ENCODE measurements at regions of chr1 and their contacts with region 1.

Region 1: DNA sequence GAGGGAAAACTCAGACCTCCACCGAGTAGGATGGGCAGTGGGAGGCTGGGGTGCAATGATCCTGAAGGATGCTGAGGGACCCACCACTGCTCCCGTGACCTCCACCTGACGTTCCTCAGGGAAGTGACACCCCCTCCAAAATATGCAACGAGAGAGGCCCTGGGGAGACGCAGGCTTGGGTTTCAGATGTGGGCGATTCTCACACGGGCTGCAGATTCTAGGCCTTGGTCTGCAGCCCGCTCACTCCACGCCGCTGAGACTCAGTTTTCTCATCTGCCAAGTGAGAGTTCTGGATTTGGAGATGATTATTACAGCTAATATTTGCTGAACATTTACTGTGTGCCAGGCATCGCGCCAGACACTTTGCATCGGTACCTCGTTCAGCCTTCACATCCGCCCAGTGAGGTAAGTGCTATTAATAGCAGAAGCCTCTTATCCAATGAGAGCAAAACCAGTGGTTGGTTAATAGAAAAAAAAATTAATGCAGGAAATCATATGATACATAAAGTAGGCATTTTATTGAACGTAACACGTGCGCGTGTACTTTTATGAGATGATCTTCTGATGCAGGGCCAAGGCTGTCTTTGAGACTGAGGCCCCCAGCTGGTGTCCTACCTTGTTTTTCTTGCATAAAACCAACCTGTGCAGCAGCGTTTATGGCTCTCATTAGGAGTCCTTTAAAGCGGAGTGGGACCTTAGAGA is 102.0 kb upstream of the RUNX3 start:
- DNase-seq: peak; percentile 67
- H3K4me3 Mint-ChIP-seq: peak overlapping the region; percentile 70
- H3K27ac Mint-ChIP-seq: peak overlapping the region; percentile 94
- H3K4me1 Mint-ChIP-seq: peaks cover 73% of the 10 kb centered on the region
- H3K27me3 Mint-ChIP-seq: no peaks in the 10 kb centered on the region

Region 2: GRCh38 chr1:24155011-24155787 is 876.9 kb before region 1 on chr1:
- CTCF ChIA-PET with region 1: no interaction called
- POLR2A ChIA-PET with region 1: no interaction called
- intact Hi-C with region 1: no loop called
- DNase-seq: peak; percentile 22
- H3K4me3 Mint-ChIP-seq: no peak overlapping the region
- H3K27ac Mint-ChIP-seq: no peak overlapping the region
- H3K4me1 Mint-ChIP-seq: peaks cover 11% of the 10 kb centered on the region
- H3K27me3 Mint-ChIP-seq: peaks cover 16% of the 10 kb centered on the region

Region 3: GRCh38 chr1:24919791-24920532 is 112.2 kb before region 1 on chr1:
- CTCF ChIA-PET with region 1: interaction called, 290 read pairs
- POLR2A ChIA-PET with region 1: interaction called, 5 read pairs
- intact Hi-C with region 1: loop called (anchors 1 kb)
- DNase-seq: peak; percentile 93
- H3K4me3 Mint-ChIP-seq: peak overlapping the region; percentile 50
- H3K27ac Mint-ChIP-seq: peak overlapping the region; percentile 98
- H3K4me1 Mint-ChIP-seq: peaks cover 89% of the 10 kb centered on the region
- H3K27me3 Mint-ChIP-seq: no peaks in the 10 kb centered on the region

Region 4: DNA sequence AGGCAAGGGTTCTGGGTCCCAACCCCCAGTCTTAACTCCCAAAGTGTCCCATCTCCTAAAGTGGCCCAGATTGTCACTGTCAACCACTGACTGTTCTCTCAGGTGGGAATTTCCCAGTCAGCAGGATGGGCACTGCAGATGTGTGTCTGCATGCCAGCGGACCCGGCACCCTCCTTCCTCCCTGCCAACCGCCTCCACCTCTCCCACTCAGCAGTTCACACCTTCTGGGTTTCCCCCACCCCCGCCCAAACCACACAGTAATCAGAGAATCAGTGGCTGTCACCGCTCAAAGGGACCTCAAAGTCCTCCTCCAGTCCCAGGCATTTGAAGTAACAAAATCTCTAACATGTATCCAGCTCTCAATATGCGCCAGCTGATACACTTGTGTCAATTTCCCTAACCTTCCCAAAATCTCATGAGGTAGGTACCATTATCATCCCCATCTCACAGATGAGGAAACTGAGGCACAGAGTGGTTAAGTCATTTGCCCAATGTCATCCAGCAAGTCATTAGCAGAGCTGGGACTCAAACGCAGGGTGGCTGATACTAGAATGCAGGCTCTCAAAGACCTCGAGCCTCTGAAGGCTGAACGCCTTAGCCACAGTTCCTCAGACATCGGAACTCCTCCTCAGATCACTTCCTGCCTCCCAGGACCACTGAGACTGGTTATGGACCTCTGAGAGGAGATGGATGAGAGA is 106.9 kb before region 1 on chr1:
- CTCF ChIA-PET with region 1: interaction called, 290 read pairs
- POLR2A ChIA-PET with region 1: interaction called, 17 read pairs
- intact Hi-C with region 1: loop called (anchors 1 kb)
- DNase-seq: peak; percentile 95
- H3K4me3 Mint-ChIP-seq: peak overlapping the region; percentile 81
- H3K27ac Mint-ChIP-seq: peak overlapping the region; percentile 91
- H3K4me1 Mint-ChIP-seq: peaks cover 69% of the 10 kb centered on the region
- H3K27me3 Mint-ChIP-seq: no peaks in the 10 kb centered on the region

Region 5: GRCh38 chr1:24955161-24955560 is 77.0 kb before region 1 on chr1:
- CTCF ChIA-PET with region 1: interaction called, 137 read pairs
- POLR2A ChIA-PET with region 1: no interaction called
- intact Hi-C with region 1: loop called (anchors 1 kb)
- DNase-seq: peak; percentile 90
- H3K4me3 Mint-ChIP-seq: peak overlapping the region; percentile 83
- H3K27ac Mint-ChIP-seq: peak overlapping the region; percentile 89
- H3K4me1 Mint-ChIP-seq: peaks cover 90% of the 10 kb centered on the region
- H3K27me3 Mint-ChIP-seq: no peaks in the 10 kb centered on the region

Region 6: GRCh38 chr1:24964811-24965570 is 67.1 kb before region 1 on chr1:
- CTCF ChIA-PET with region 1: interaction called, 137 read pairs
- POLR2A ChIA-PET with region 1: interaction called, 20 read pairs
- intact Hi-C with region 1: loop called (anchors 1 kb)
- DNase-seq: peak; percentile 97
- H3K4me3 Mint-ChIP-seq: peak overlapping the region; percentile 93
- H3K27ac Mint-ChIP-seq: peak overlapping the region; percentile 97
- H3K4me1 Mint-ChIP-seq: peaks cover 78% of the 10 kb centered on the region
- H3K27me3 Mint-ChIP-seq: no peaks in the 10 kb centered on the region

Region 7: DNA sequence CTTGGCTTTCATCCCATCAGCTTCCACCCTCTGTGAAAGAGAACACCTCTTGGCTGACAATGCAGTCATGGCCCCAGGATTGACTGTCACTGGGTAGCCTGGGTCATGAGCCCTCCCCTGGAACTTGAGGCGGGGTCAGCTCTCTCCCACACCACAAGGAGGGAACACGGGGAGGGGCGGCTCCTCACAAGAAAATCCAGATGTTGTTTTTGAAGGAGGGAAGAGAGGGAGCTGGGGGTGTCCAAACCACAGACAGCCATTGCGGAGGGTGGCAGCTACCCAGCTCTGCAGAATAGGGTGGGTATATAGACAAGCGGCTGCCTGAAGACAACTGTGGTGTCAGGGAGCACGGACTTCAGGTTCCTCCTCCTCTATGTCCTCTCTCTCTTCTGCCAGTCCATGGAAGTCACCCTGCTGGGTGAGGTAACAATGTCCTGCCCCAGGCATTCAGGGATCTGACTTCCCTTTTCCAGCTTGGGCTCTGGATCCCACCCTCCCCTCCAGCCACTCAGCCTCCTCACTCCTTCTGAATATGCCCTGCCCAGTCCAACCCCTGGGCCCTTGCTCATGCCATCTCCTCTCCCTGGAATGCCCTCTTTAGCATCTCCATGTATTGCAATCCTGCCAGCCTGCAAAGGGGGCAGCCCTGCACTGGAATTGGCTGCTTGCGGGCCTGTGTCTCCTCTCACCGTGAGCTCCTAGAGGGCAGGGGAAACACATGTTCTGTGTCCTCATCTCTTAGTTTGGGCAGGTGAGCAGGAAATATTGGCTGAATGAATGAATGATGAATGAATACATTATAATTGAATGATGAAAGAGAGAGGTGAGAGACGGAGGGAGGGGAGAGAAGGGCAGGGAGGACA is 41.1 kb before region 1 on chr1:
- CTCF ChIA-PET with region 1: interaction called, 19 read pairs
- POLR2A ChIA-PET with region 1: interaction called, 3 read pairs
- intact Hi-C with region 1: loop called (anchors 2 kb)
- DNase-seq: peak; percentile 41
- H3K4me3 Mint-ChIP-seq: no peak overlapping the region
- H3K27ac Mint-ChIP-seq: peak overlapping the region; percentile 94
- H3K4me1 Mint-ChIP-seq: peaks cover 82% of the 10 kb centered on the region
- H3K27me3 Mint-ChIP-seq: no peaks in the 10 kb centered on the region

Region 8: DNA sequence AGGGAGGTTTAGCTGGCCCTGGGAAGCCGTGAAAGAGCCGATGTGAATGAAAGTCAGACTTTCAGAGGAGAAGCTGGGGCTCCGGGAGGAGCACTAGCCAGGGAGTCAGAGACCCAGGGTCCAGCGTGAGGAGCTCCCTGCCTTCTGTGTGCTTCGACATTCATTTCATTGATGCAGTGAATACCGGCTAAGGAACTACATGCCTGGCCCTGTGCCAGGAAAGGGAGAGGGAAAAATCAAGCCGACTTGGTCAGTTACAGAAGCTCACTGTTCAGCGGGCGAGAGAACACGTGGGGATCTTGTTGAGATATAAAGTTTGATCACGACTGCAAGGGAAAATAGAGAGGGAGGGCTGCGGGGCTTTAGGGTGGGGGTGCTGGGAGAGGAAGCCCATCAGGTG is 25.3 kb before region 1 on chr1:
- CTCF ChIA-PET with region 1: interaction called, 11 read pairs
- POLR2A ChIA-PET with region 1: interaction called, 3 read pairs
- intact Hi-C with region 1: loop called (anchors 1 kb)
- DNase-seq: no peak
- H3K4me3 Mint-ChIP-seq: no peak overlapping the region
- H3K27ac Mint-ChIP-seq: no peak overlapping the region
- H3K4me1 Mint-ChIP-seq: peaks cover 56% of the 10 kb centered on the region
- H3K27me3 Mint-ChIP-seq: no peaks in the 10 kb centered on the region